ENCODE measurements at regions of chr2 and their contacts with region 1.

Region 1: DNA sequence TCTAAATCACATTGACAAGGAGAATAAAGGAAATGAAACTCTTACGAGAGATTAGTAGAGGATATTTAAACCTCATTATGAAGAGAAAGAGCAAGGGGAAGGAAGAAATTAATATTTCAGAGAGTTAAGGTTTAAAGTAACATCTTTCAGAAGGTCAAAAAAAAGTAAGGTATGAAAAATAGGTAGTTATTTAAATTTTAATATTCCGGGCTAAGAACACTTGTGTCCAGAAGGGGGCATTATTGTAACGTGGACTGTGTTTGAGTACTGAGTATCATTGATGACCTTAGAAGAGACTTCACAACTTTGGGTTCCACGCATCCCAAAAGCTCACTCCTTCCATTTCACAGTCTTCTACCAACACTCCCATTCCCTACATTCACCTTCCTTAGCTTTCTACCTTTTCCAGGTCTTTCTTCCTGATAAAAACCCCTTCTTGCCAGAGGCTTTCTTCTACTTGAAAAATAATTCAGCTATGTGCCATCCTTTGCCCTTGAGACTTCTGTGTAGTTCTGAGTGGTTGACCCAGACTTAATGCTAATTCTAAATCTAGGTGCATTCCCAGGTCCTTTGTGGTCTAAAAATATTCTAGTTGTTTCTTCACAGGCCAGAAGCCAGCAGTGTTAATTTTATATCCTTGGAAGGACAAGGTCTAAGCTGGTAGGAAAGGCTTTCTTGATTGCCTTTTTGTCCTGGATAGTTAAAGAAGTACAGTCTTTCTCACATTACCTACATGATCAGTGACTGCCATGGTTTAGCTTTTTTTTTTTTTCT is 16.5 kb downstream of the DYNC1I2 start:
- DNase-seq: peak; percentile 53
- ATAC-seq: peak; percentile 69
- H3K4me3 ChIP-seq: no peak overlapping the region
- H3K27ac ChIP-seq: no peak overlapping the region
- H3K4me1 ChIP-seq: peaks cover 8% of the 10 kb centered on the region; the same call in 1 of the 2 replicates
- H3K27me3 ChIP-seq: no peaks in the 10 kb centered on the region
- CTCF ChIP-seq: peak; percentile 73
- EP300 ChIP-seq: no peak
- POLR2A ChIP-seq: no peak
- RAD21 ChIP-seq: peak; percentile 73

Region 2: DNA sequence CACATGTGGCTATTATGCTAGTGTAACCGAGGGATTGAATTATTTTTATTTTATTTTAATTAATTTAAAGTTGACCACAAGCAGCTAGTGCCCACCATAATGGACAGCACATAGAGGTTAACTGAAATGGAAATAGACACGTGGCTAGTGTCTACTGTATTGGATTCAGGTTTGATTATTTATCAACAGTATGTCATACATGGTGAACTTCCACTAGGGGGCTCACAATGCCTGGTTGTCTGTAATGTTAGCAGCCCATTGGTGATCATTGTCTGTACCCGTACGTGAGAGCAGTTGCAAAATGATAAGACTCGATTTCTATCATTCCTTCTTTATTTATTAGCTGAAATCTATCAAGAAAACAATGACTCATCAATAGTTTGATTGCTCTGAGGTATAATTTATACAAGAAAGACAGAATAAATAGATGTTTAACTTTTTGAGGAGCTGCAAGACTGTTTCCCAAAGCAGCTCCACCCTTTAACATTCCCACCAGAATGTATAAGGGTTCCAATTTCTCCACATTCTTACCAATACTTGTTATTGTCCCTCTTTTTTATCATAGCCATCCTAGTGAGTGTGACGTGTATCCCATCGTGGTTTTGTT is 104.9 kb before region 1 on chr2:
- CTCF ChIA-PET with region 1: no interaction called
- POLR2A ChIA-PET with region 1: no interaction called
- in situ Hi-C with region 1: no loop called
- intact Hi-C with region 1: loop called (anchors 5 kb)
- DNase-seq: peak; percentile 72
- ATAC-seq: peak; percentile 99
- H3K4me3 ChIP-seq: no peak overlapping the region
- H3K27ac ChIP-seq: no peak overlapping the region
- H3K4me1 ChIP-seq: no peaks in the 10 kb centered on the region
- H3K27me3 ChIP-seq: peaks cover 3 to 9% of the 10 kb centered on the region in 2 experiments; a peak in 4 of 5 replicates
- CTCF ChIP-seq: peak; percentile 83
- EP300 ChIP-seq: no peak
- POLR2A ChIP-seq: no peak
- RAD21 ChIP-seq: 0 out of 2 replicates have a peak, but pooled peaks have one; percentile 46

Region 3: GRCh38 chr2:171811245-171811628 is 107.5 kb after region 1 on chr2:
- CTCF ChIA-PET with region 1: no interaction called
- POLR2A ChIA-PET with region 1: no interaction called
- in situ Hi-C with region 1: no loop called
- intact Hi-C with region 1: loop called (anchors 5 kb)
- DNase-seq: peak; percentile 26
- ATAC-seq: no peak
- H3K4me3 ChIP-seq: no peak overlapping the region
- H3K27ac ChIP-seq: no peak overlapping the region
- H3K4me1 ChIP-seq: peaks cover 24% of the 10 kb centered on the region
- H3K27me3 ChIP-seq: no peaks in the 10 kb centered on the region
- CTCF ChIP-seq: peak; percentile 74
- EP300 ChIP-seq: no peak
- POLR2A ChIP-seq: no peak
- RAD21 ChIP-seq: peak; percentile 54; the same call in 1 of the 2 replicates

Region 4: DNA sequence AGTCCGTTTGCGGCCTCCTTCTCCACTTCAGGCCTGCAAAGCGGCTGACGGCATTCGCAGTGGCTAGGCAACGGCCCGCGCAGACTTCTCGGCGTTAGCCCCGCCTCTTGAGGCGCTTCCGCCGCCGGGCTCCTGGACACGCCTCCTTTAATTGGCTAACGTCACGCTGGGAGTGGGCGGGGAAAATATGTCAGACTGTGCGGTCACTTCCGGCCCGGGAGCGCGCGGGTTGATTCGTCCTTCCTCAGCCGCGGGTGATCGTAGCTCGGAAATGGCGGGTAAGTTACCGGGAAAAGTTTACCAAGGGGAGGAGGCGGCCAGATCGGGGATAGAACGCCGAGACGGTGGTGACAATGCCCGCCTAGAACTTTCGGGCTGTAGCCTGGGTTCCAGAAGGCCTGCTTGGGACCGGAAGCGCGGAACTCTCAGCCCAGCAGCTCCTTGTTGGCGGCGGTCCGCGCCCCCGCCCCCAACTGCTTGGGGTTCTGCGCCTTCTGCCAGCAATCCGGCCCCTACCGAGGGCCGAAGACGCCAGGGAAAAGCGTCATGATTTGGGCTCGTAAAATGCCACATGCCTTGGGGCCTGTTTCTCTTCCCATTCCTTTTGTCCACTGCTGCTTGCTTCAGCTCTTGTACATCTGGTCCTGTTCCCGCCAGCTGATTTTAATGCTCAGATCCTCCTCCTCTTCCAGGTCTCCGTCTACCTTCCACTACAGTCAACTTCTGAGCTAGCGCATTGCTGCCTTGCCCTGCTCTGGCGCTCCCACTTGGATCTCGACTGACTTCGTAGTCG is 218.7 kb after region 1 on chr2 and contains the start of gene HAT1:
- CTCF ChIA-PET with region 1: interaction called, 3 read pairs
- POLR2A ChIA-PET with region 1: no interaction called
- in situ Hi-C with region 1: no loop called
- intact Hi-C with region 1: loop called (anchors 5 kb)
- DNase-seq: peak; percentile 94
- ATAC-seq: peak; percentile 94
- H3K4me3 ChIP-seq: peak within 1 kb of the TSS; percentile 87 to 95 (median 87)
- H3K27ac ChIP-seq: peak within 1 kb of the TSS; percentile 83
- H3K4me1 ChIP-seq: peaks cover 32% of the 10 kb centered on the region
- H3K27me3 ChIP-seq: peaks cover 0 to 3% of the 10 kb centered on the region in 2 experiments; a peak in 1 of 5 replicates
- CTCF ChIP-seq: no peak
- EP300 ChIP-seq: peak; percentile 3 to 7; a peak in 2 of 4 replicates
- POLR2A ChIP-seq: peak in 1 of 2 experiments; percentile 81; a peak in 3 of 4 replicates
- RAD21 ChIP-seq: 0 out of 2 replicates have a peak, but pooled peaks have one; percentile 40
- total RNA-seq, gene HAT1: 119 and 195 TPM in 2 replicates

Region 5: GRCh38 chr2:172128484-172128883 is 424.7 kb after region 1 on chr2:
- CTCF ChIA-PET with region 1: interaction called, 11 read pairs
- POLR2A ChIA-PET with region 1: no interaction called
- in situ Hi-C with region 1: no loop called
- intact Hi-C with region 1: loop called (anchors 1 kb)
- DNase-seq: no peak
- ATAC-seq: no peak
- H3K4me3 ChIP-seq: no peak overlapping the region
- H3K27ac ChIP-seq: no peak overlapping the region
- H3K4me1 ChIP-seq: no peaks in the 10 kb centered on the region
- H3K27me3 ChIP-seq: no peaks in the 10 kb centered on the region; a peak in 1 of 5 replicates
- CTCF ChIP-seq: no peak
- EP300 ChIP-seq: no peak
- POLR2A ChIP-seq: no peak
- RAD21 ChIP-seq: no peak

Measured in HepG2 (cell line).